A549 (cell line): ENCODE measurements at regions of chr12 and their contacts with region 1.

Region 1: GRCh38 chr12:92145731-92146496 is at the start of gene BTG1:
- DNase-seq: peak; percentile 95 to 100
- ATAC-seq: peak; percentile 82 to 85
- H3K4me3 ChIP-seq: peak within 1 kb of the TSS; percentile 91
- H3K27ac ChIP-seq: peak within 1 kb of the TSS; percentile 92 to 98
- H3K4me1 ChIP-seq: peaks cover 10% of the 10 kb centered on the region
- CTCF ChIP-seq: no peak
- EP300 ChIP-seq: no peak
- POLR2A ChIP-seq: peak; percentile 100
- RAD21 ChIP-seq: peak; percentile 35 to 37; a peak in 4 of 5 replicates
- polyA plus RNA-seq, gene BTG1: 138 and 215 TPM in 2 replicates

Region 2: DNA sequence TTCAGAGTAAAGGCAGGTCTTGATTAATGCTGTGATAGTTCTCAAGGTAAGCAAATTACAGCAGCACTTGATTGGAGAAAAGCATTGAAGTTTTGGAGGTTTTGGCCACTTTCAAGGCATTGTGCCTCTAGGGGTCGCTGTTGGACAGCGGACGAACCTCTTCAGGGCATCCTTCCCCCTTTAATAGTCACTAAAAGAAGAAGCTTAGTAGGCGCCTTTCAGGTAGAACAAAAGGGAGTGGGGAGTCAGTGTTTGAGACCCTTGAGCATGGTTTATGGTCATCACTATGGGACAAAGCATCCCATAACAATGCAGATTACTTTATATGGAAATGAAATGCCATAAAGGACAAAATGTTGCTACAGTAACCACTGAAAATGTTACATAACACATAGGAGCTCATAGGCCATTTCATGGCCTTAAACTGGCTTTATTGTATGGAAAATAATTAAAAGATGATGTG is 763.8 kb before region 1 on chr12:
- CTCF ChIA-PET with region 1: interaction called, 21 read pairs
- POLR2A ChIA-PET with region 1: interaction called, 33 read pairs
- DNase-seq: peak; percentile 7 to 75
- ATAC-seq: peak; percentile 64 to 89; a peak in 5 of 6 replicates
- H3K4me3 ChIP-seq: no peak overlapping the region
- H3K27ac ChIP-seq: peak overlapping the region; percentile 8 to 24; a peak in 1 of 6 replicates
- H3K4me1 ChIP-seq: peaks cover 4% of the 10 kb centered on the region; the same call in 1 of the 3 replicates
- CTCF ChIP-seq: peak; percentile 92
- EP300 ChIP-seq: no peak
- POLR2A ChIP-seq: no peak
- RAD21 ChIP-seq: peak; percentile 96 to 97

Region 3: GRCh38 chr12:92208613-92209121 is 62.8 kb after region 1 on chr12:
- CTCF ChIA-PET with region 1: interaction called, 3 read pairs
- POLR2A ChIA-PET with region 1: interaction called, 54 read pairs
- DNase-seq: peak; percentile 26 to 70
- ATAC-seq: peak; percentile 83 to 86
- H3K4me3 ChIP-seq: peak overlapping the region; percentile 42
- H3K27ac ChIP-seq: peak overlapping the region; percentile 71 to 84
- H3K4me1 ChIP-seq: peaks cover 29% of the 10 kb centered on the region
- CTCF ChIP-seq: no peak
- EP300 ChIP-seq: no peak
- POLR2A ChIP-seq: no peak
- RAD21 ChIP-seq: no peak

Region 4: DNA sequence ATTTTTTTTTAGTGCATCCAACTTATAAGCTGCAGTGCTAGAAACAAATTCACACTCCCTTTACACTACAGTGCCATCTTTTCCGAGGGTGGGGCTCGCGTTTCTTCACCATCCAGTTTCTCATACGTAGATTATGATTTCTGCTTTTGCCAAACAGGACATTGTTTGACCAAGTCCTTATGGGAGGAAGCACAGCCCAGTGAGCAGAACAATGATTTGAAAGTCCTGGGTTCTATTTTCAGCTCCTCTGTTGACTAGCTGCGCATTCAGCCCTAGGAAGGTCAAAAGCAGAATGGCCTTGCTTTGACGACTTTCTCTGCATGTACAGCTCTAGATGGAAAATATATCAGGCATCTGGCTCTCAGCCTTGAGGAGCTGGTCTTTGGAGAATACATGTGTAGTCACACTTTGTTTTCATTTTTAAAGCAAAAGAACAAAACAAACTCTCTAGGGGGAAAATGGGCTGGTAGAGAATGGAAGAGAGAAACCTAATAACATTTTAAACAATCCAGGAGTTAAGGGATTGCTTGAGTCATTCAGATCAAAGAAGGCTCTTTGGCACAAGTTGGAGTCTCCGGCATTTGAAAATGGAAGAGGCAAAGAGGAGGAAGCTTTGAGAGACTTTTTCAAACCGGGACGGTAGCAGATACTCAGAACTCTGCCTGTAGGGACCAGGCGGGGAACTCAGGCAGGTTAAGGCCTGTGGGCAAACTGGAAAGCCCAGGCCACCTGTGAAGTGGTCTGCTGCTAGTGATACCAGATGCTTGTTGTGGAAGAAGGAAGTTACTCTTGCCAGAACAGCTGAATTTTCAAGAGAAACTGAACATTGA is 299.6 kb after region 1 on chr12:
- CTCF ChIA-PET with region 1: no interaction called
- POLR2A ChIA-PET with region 1: interaction called, 10 read pairs
- DNase-seq: no peak
- ATAC-seq: no peak
- H3K4me3 ChIP-seq: no peak overlapping the region
- H3K27ac ChIP-seq: peak overlapping the region in 1 of 2 experiments; percentile 44; a peak in 2 of 6 replicates
- H3K4me1 ChIP-seq: peaks cover 5% of the 10 kb centered on the region; the same call in 1 of the 3 replicates
- CTCF ChIP-seq: no peak
- EP300 ChIP-seq: no peak
- POLR2A ChIP-seq: no peak
- RAD21 ChIP-seq: no peak

Region 5: DNA sequence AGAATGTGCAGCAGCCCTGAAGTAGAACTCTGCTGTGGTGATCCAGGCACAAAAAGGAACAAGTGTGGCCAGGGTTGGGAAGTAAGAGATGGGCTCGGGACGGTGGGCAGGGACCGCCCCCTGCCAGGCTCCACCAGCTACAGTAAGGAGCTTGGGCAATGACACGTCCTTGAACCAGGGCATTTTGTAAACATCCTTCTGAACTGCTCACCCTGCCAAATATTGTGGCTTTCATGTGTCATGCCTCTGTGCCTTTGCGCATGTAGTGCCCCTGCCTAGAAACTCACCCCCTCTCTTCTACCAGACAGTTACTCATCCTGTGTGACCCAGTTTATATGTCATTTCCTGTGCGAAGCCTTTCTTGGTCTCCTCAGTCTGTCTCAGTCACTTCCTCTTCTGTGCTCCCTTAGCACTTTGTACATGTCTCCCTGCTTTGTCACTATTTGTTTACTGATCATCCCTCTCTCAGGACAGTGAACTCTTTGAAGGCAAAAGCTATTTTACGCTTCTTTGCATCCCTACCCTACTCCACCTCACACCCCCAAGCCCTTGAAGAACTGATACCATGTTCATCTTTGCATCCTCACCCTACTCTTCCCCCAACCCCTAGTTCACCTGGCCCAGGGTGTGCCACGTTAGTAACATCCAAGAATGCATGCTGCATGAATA is 448.0 kb after region 1 on chr12:
- CTCF ChIA-PET with region 1: interaction called, 4 read pairs
- POLR2A ChIA-PET with region 1: interaction called, 19 read pairs
- DNase-seq: peak; percentile 88 to 97
- ATAC-seq: peak; percentile 94 to 99
- H3K4me3 ChIP-seq: no peak overlapping the region
- H3K27ac ChIP-seq: peak overlapping the region; percentile 93 to 97
- H3K4me1 ChIP-seq: peaks cover 44% of the 10 kb centered on the region
- CTCF ChIP-seq: no peak
- EP300 ChIP-seq: peak; percentile 99
- POLR2A ChIP-seq: no peak
- RAD21 ChIP-seq: no peak; a peak in 3 of 5 replicates

Region 6: GRCh38 chr12:92649511-92650227 is 503.8 kb after region 1 on chr12:
- CTCF ChIA-PET with region 1: interaction called, 10 read pairs
- POLR2A ChIA-PET with region 1: interaction called, 25 read pairs
- DNase-seq: peak; percentile 72 to 93
- ATAC-seq: peak; percentile 99
- H3K4me3 ChIP-seq: no peak overlapping the region
- H3K27ac ChIP-seq: peak overlapping the region; percentile 79 to 83
- H3K4me1 ChIP-seq: peaks cover 18% of the 10 kb centered on the region
- CTCF ChIP-seq: peak; percentile 92
- EP300 ChIP-seq: no peak
- POLR2A ChIP-seq: no peak
- RAD21 ChIP-seq: peak; percentile 97